ENCODE measurements at regions of chr14 and their contacts with region 1.

Region 1: GRCh38 chr14:104650057-104650981 is 39.1 kb upstream of the INF2 start:
- DNase-seq: peak; percentile 59
- ATAC-seq: peak; percentile 88
- H3K4me3 ChIP-seq: peak overlapping the region; percentile 83
- H3K27ac ChIP-seq: no peak overlapping the region
- H3K4me1 ChIP-seq: no peaks in the 10 kb centered on the region
- H3K27me3 ChIP-seq: no peaks in the 10 kb centered on the region
- CTCF ChIP-seq: peak; percentile 98

Region 2: DNA sequence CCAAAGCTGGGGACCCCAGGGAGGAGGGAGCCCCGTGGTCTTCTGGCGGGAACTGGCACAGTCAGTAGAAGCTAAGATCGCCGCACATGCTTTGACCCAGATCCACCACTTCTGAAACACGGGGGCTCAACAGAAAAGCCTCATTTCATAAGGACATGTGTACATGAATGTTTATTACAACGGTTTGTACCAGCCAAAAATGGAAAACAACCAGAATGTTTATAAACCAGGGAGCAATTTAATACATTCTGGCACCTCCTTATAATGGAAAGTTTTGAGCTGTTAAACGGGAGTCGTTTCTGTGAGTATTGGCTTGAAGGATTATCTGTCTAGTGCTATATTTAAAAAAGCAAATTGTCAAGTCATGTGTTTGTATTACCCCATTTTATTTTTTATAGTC is 38.4 kb before region 1 on chr14:
- CTCF ChIA-PET with region 1: no interaction called
- POLR2A ChIA-PET with region 1: no interaction called
- intact Hi-C with region 1: no loop called
- DNase-seq: no peak
- ATAC-seq: no peak
- H3K4me3 ChIP-seq: no peak overlapping the region
- H3K27ac ChIP-seq: no peak overlapping the region
- H3K4me1 ChIP-seq: no peaks in the 10 kb centered on the region
- H3K27me3 ChIP-seq: peaks cover 67% of the 10 kb centered on the region
- CTCF ChIP-seq: no peak

Region 3: DNA sequence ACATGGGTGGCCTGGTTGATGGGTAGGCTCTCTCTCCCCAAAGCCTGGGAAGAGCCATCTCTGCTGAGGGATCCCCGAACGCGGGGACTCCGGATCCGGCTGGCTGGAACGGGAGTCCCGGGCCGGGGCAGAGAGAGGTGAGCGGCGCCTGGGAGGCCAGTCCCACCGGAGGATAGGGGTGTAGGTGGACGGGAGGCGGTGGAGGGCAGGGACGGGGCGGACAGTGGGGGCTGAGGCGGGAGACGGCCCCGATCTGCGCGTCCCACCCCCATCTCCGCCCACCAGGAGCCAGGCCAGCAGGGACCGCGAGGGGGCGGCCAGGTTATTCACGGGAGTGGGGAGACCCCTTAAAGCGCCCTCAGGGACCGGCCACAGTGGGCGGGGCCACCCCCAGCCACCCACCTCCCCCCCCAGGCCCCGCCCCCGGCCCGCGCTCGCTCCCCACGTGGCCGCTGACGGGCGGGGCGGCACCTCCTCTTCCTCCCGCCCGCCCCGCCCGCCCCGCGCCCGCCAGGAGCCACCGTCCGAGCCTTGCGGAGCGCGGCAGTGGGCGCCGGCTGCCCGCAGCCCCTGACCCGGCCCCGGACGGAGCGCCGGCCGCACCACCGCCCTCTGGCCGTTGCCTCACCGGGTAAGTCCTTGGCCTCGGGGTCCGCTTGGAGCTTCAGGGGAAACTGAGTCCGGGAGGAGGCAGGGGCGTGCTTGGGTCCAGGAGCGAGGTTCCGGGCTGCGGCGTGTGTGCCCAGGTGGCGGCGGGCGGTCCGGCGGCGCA is 39.0 kb after region 1 on chr14 and contains the start of gene INF2:
- CTCF ChIA-PET with region 1: no interaction called
- POLR2A ChIA-PET with region 1: no interaction called
- intact Hi-C with region 1: loop called (anchors 2 kb)
- DNase-seq: peak; percentile 74
- ATAC-seq: peak; percentile 45
- H3K4me3 ChIP-seq: peak within 1 kb of the TSS; percentile 96
- H3K27ac ChIP-seq: peak within 1 kb of the TSS; percentile 80
- H3K4me1 ChIP-seq: peaks cover 57% of the 10 kb centered on the region
- H3K27me3 ChIP-seq: no peaks in the 10 kb centered on the region
- CTCF ChIP-seq: no peak
- total RNA-seq, gene INF2: 132 and 161 TPM in 2 replicates

Region 4: DNA sequence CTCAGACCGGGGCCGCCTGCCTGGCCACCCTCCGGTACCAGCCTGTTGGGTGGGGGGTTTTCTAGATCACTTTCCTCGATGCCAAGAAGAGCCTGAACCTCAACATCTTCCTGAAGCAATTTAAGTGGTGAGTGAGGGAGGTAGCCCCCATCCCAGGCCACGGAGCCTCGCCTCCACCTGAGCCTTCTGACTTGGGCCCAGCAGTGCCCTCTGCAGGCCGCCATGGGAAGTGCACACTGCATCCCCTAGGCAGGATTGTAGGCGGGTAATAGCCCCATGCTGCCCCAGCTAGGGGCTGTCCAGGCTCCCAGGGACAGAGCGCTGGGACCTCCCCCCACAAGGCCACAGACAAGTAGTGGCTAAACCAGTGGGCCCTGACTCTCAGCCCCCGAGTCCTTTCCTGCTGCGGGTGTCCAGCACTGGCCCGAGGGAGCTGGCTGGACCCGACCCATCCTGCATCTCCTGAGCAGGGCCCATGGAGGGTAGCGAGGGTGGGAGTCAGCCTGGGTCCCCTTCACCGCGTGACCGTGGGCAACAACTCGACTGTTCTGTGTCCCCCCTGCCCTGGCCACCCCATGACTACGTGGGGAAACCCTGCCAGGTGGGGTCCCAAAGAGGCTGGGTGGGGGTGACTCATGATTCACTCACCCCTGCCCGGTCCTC is 58.4 kb after region 1 on chr14:
- CTCF ChIA-PET with region 1: no interaction called
- POLR2A ChIA-PET with region 1: no interaction called
- intact Hi-C with region 1: loop called (anchors 1 kb)
- DNase-seq: peak; percentile 80
- ATAC-seq: peak; percentile 71
- H3K4me3 ChIP-seq: no peak overlapping the region
- H3K27ac ChIP-seq: no peak overlapping the region
- H3K4me1 ChIP-seq: no peaks in the 10 kb centered on the region
- H3K27me3 ChIP-seq: no peaks in the 10 kb centered on the region
- CTCF ChIP-seq: peak; percentile 93

Measured in PC-3 (cell line).